HepG2 (cell line): ENCODE measurements at regions of chr5 and their contacts with region 1.

Region 1: GRCh38 chr5:129767906-129768380 is 20.0 kb downstream of the MINAR2 start:
- DNase-seq: peak; percentile 83
- ATAC-seq: peak; percentile 95
- H3K4me3 ChIP-seq: no peak overlapping the region
- H3K27ac ChIP-seq: no peak overlapping the region
- H3K4me1 ChIP-seq: no peaks in the 10 kb centered on the region
- H3K27me3 ChIP-seq: no peaks in the 10 kb centered on the region
- CTCF ChIP-seq: peak; percentile 91
- EP300 ChIP-seq: no peak
- POLR2A ChIP-seq: no peak
- RAD21 ChIP-seq: peak; percentile 52

Region 2: DNA sequence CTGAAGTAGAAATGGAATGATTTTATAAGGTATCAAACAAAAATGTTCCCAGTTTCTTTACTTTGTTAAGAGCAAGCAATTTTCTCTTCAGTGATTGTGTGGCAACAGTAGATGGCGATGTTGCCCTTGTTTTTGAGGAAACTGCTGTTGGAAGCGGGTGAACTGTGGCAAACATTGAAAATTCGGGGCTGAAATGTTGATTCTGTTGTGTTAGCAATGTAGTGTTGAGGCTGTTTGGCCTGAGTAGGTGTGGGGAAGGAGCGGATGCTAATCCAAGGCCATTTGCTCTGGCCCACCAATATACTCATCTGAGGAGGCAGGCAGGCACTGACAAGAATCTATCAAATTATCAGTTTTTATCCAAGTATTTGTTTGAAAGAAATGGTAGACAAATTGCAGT is 1554.6 kb before region 1 on chr5:
- CTCF ChIA-PET with region 1: interaction called, 11 read pairs
- POLR2A ChIA-PET with region 1: no interaction called
- in situ Hi-C with region 1: loop called (anchors 10 kb)
- intact Hi-C with region 1: no loop called
- DNase-seq: peak; percentile 39
- ATAC-seq: peak; percentile 67
- H3K4me3 ChIP-seq: no peak overlapping the region
- H3K27ac ChIP-seq: no peak overlapping the region
- H3K4me1 ChIP-seq: peaks cover 14% of the 10 kb centered on the region
- H3K27me3 ChIP-seq: peaks cover 0 to 6% of the 10 kb centered on the region in 2 experiments; a peak in 2 of 5 replicates
- CTCF ChIP-seq: peak; percentile 82
- EP300 ChIP-seq: no peak
- POLR2A ChIP-seq: no peak
- RAD21 ChIP-seq: peak; percentile 62; the same call in 1 of the 2 replicates

Region 3: DNA sequence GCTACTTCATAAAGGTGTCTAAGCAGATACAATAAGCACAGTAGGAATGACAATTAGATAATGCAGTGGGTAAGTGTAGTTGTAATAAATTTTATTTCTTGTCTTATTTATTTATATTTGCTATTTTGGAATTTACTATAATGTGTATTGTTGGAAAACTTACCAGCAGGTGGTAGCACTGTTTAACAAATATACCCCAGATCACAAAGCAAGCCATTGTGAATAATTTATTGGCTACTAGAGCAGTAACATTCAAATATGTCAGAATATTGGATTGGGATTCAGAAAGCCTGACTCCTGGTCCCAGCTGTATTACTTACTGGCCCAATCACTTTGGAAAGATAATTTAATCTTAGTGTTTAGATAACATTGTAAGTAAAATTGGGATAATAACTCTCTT is 595.4 kb before region 1 on chr5:
- CTCF ChIA-PET with region 1: no interaction called
- POLR2A ChIA-PET with region 1: no interaction called
- in situ Hi-C with region 1: no loop called
- intact Hi-C with region 1: loop called (anchors 2 kb)
- DNase-seq: no peak
- ATAC-seq: no peak
- H3K4me3 ChIP-seq: no peak overlapping the region
- H3K27ac ChIP-seq: no peak overlapping the region
- H3K4me1 ChIP-seq: no peaks in the 10 kb centered on the region
- H3K27me3 ChIP-seq: no peaks in the 10 kb centered on the region
- CTCF ChIP-seq: no peak
- EP300 ChIP-seq: no peak
- POLR2A ChIP-seq: no peak
- RAD21 ChIP-seq: no peak

Region 4: GRCh38 chr5:129460936-129461711 is 306.8 kb before region 1 on chr5:
- CTCF ChIA-PET with region 1: no interaction called
- POLR2A ChIA-PET with region 1: no interaction called
- in situ Hi-C with region 1: no loop called
- intact Hi-C with region 1: loop called (anchors 5 kb)
- DNase-seq: no peak
- ATAC-seq: peak; percentile 92
- H3K4me3 ChIP-seq: peak overlapping the region in 1 of 3 experiments; percentile 16; a peak in 3 of 6 replicates
- H3K27ac ChIP-seq: no peak overlapping the region
- H3K4me1 ChIP-seq: peaks cover 6% of the 10 kb centered on the region; the same call in 1 of the 2 replicates
- H3K27me3 ChIP-seq: peaks cover 0 to 21% of the 10 kb centered on the region in 2 experiments; a peak in 4 of 5 replicates
- CTCF ChIP-seq: peak; percentile 54
- EP300 ChIP-seq: no peak
- POLR2A ChIP-seq: no peak
- RAD21 ChIP-seq: no peak

Region 5: GRCh38 chr5:129852747-129853352 is 84.9 kb after region 1 on chr5:
- CTCF ChIA-PET with region 1: interaction called, 15 read pairs
- POLR2A ChIA-PET with region 1: no interaction called
- in situ Hi-C with region 1: loop called (anchors 5 kb)
- intact Hi-C with region 1: loop called (anchors 1 kb)
- DNase-seq: peak; percentile 56
- ATAC-seq: peak; percentile 99
- H3K4me3 ChIP-seq: no peak overlapping the region
- H3K27ac ChIP-seq: no peak overlapping the region
- H3K4me1 ChIP-seq: no peaks in the 10 kb centered on the region
- H3K27me3 ChIP-seq: no peaks in the 10 kb centered on the region
- CTCF ChIP-seq: peak; percentile 86
- EP300 ChIP-seq: no peak
- POLR2A ChIP-seq: no peak
- RAD21 ChIP-seq: peak; percentile 52